CD4-positive, alpha-beta T cell (primary cell): ENCODE measurements at regions of chr17 and their contacts with region 1.

Region 1: DNA sequence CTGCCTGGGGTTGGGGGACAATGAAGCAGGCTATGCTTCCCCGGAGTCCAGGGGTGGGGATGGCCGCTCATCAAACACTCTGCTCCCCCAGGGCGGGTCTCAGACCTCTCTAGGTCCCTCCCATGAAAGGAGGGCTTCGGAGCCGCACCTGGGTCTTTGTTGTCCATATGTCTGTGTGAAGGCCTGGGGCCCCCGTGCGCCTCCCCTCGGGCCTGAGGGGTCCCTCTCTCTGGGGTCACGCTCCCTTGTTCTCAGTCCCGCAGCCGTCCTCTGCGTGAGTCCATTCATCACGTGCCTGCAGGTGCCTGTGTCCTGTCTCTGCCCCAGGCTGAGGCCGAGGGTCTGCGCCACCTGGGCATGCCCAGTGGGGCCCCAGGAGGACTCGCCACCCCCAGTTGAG is 15.6 kb downstream of the BAHCC1 start:
- DNase-seq: no peak
- ATAC-seq: no peak
- H3K4me3 ChIP-seq: no peak overlapping the region
- H3K4me3 Mint-ChIP-seq: no peak overlapping the region
- H3K27ac ChIP-seq: no peak overlapping the region
- H3K27ac Mint-ChIP-seq: no peak overlapping the region
- H3K4me1 ChIP-seq: peaks cover 34% of the 10 kb centered on the region
- H3K4me1 Mint-ChIP-seq: peaks cover 9% of the 10 kb centered on the region
- H3K27me3 ChIP-seq: peaks cover 23 to 30% of the 10 kb centered on the region in 2 experiments
- H3K27me3 Mint-ChIP-seq: peaks cover 34% of the 10 kb centered on the region
- CTCF ChIP-seq: no peak

Region 2: DNA sequence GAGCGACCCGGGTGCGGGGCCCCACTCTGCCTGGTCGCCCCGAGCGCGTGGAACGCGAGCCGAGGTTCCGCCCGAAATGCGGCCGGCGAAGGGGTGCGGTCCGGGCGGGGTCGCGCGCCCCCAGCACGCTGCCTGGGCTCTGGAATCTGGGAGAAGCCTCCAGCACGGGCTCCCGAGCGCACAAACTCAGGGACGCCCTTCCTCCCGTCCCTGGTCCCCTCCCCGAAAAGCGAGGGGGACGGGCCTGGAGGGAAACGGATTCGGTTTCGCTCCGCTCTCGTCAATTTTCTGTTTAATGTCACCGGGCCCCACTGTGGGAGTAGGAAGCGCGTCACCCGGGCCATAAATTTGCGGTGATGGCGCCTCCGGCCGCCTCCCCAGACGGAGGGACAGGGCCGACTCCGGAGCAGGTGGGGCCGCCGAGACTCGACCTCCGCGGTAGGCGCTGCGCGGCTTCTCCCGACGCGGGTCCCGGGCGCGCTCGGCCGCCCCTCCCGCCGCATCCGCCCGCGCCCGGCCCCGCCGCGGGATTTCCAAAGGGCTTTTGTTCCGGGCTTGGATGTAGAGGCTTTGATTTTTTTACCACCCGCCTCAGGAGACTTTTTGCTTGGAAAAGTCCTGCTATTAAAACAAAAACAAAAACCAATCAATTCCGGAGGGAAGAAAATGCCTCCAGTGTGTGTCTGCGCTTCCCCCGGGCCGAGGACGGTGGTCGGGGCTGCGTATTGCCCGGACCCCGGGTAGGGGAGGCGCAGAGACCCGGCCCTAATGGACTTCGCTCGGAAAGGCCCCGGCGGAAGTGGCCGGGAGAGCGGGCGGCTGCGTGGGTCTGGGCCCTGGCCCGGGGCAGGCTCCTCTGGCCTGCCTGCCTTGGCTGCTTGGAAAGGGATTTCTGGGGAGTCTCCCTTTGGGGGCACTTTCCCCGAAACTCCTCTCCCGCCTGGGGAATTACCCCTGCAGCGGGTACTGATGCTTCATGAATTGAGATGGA is 23.5 kb before region 1 on chr17:
- CTCF ChIA-PET with region 1: no interaction called
- POLR2A ChIA-PET with region 1: no interaction called
- intact Hi-C with region 1: no loop called
- DNase-seq: peak in 3 of 14 experiments; percentile 57 to 62 (median 60)
- ATAC-seq: peak; percentile 67
- H3K4me3 ChIP-seq: peak overlapping the region; percentile 55
- H3K4me3 Mint-ChIP-seq: peak overlapping the region; percentile 62
- H3K27ac ChIP-seq: no peak overlapping the region
- H3K27ac Mint-ChIP-seq: no peak overlapping the region
- H3K4me1 ChIP-seq: peaks cover 18% of the 10 kb centered on the region
- H3K4me1 Mint-ChIP-seq: no peaks in the 10 kb centered on the region
- H3K27me3 ChIP-seq: peaks cover 57 to 60% of the 10 kb centered on the region in 2 experiments
- H3K27me3 Mint-ChIP-seq: peaks cover 67% of the 10 kb centered on the region
- CTCF ChIP-seq: no peak

Region 3: GRCh38 chr17:81424151-81425017 is 13.5 kb after region 1 on chr17:
- CTCF ChIA-PET with region 1: no interaction called
- POLR2A ChIA-PET with region 1: no interaction called
- intact Hi-C with region 1: loop called in 1 of 2 experiments (anchors 1 kb)
- DNase-seq: no peak
- ATAC-seq: no peak
- H3K4me3 ChIP-seq: no peak overlapping the region
- H3K4me3 Mint-ChIP-seq: no peak overlapping the region
- H3K27ac ChIP-seq: no peak overlapping the region
- H3K27ac Mint-ChIP-seq: no peak overlapping the region
- H3K4me1 ChIP-seq: peaks cover 30% of the 10 kb centered on the region
- H3K4me1 Mint-ChIP-seq: peaks cover 6% of the 10 kb centered on the region
- H3K27me3 ChIP-seq: peaks cover 30 to 33% of the 10 kb centered on the region in 2 experiments
- H3K27me3 Mint-ChIP-seq: peaks cover 11% of the 10 kb centered on the region
- CTCF ChIP-seq: no peak